Naive thymus-derived CD4-positive, alpha-beta T cell (primary cell): ENCODE measurements at regions of chr22 and their contacts with region 1.

Region 1: DNA sequence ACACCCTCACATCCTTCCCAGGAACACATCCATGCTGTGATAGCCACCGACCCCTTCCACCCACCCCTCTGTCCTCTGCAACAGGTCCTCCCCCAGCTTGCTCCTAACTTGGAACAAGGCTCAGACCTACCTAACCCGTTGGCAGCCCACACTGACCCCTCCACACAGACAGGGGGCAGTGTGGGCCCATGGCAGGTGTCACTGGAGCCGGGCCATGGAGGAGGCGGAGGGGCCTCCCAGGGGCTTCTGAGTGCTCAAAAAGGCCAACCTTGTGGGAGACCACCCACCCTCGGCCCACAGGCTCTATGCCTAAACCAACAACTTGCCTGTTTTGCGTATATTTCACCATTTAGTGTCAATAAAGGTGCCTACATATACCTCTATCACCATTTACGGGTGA is 57.0 kb downstream of the CERK start:
- DNase-seq: no peak
- ATAC-seq: no peak
- H3K4me3 ChIP-seq: no peak overlapping the region
- H3K4me3 Mint-ChIP-seq: no peak overlapping the region
- H3K27ac ChIP-seq: no peak overlapping the region
- H3K27ac Mint-ChIP-seq: peak overlapping the region in 2 of 9 donors; percentile 18 to 74
- H3K4me1 ChIP-seq: peaks cover 0 to 23% of the 10 kb centered on the region in 2 donors
- H3K4me1 Mint-ChIP-seq: peaks cover 15 to 33% (median 21%) of the 10 kb centered on the region in 7 donors
- H3K27me3 ChIP-seq: no peaks in the 10 kb centered on the region
- H3K27me3 Mint-ChIP-seq: no peaks in the 10 kb centered on the region

Region 2: GRCh38 chr22:46537225-46537945 is 143.6 kb before region 1 on chr22 and contains the start of gene CELSR1:
- CTCF ChIA-PET with region 1: no interaction called
- POLR2A ChIA-PET with region 1: no interaction called
- intact Hi-C with region 1: no loop called
- DNase-seq: peak in 1 of 9 donors; percentile 54
- ATAC-seq: peak; percentile 49
- H3K4me3 ChIP-seq: no peak within 1 kb of the TSS
- H3K4me3 Mint-ChIP-seq: peak within 1 kb of the TSS in 8 of 10 donors; percentile 23 to 80 (median 56)
- H3K27ac ChIP-seq: no peak within 1 kb of the TSS
- H3K27ac Mint-ChIP-seq: no peak within 1 kb of the TSS
- H3K4me1 ChIP-seq: peaks cover 8% of the 10 kb centered on the region in 2 donors
- H3K4me1 Mint-ChIP-seq: peaks cover 0 to 12% (median 8%) of the 10 kb centered on the region in 7 donors
- H3K27me3 ChIP-seq: no peaks in the 10 kb centered on the region
- H3K27me3 Mint-ChIP-seq: peaks cover 19 to 41% (median 20%) of the 10 kb centered on the region in 5 donors
- total RNA-seq, gene CELSR1: 0.36 to 4.7 (median 0.97) TPM

Region 3: GRCh38 chr22:46798366-46799350 is 117.6 kb after region 1 on chr22:
- CTCF ChIA-PET with region 1: no interaction called
- POLR2A ChIA-PET with region 1: no interaction called
- intact Hi-C with region 1: loop called in 1 of 2 experiments (anchors 5 kb)
- DNase-seq: peak; percentile 37 to 78 (median 59)
- ATAC-seq: peak; percentile 84
- H3K4me3 ChIP-seq: no peak overlapping the region
- H3K4me3 Mint-ChIP-seq: peak overlapping the region in 2 of 10 donors; percentile 13 to 34
- H3K27ac ChIP-seq: no peak overlapping the region
- H3K27ac Mint-ChIP-seq: peak overlapping the region; percentile 49 to 91 (median 80)
- H3K4me1 ChIP-seq: peaks cover 7 to 8% of the 10 kb centered on the region in 2 donors
- H3K4me1 Mint-ChIP-seq: peaks cover 11 to 36% (median 20%) of the 10 kb centered on the region in 7 donors
- H3K27me3 ChIP-seq: no peaks in the 10 kb centered on the region
- H3K27me3 Mint-ChIP-seq: no peaks in the 10 kb centered on the region